ENCODE measurements at regions of chr7 and their contacts with region 1.

Region 1: GRCh38 chr7:21767300-21767900 is 178.3 kb downstream of the CDCA7L start:
- DNase-seq: peak; percentile 91
- ATAC-seq: peak; percentile 100
- H3K4me3 ChIP-seq: no peak overlapping the region
- H3K27ac ChIP-seq: no peak overlapping the region
- H3K4me1 ChIP-seq: no peaks in the 10 kb centered on the region
- H3K27me3 ChIP-seq: no peaks in the 10 kb centered on the region
- CTCF ChIP-seq: peak; percentile 85 to 98 (median 92)
- POLR2A ChIP-seq: no peak
- RAD21 ChIP-seq: peak; percentile 97

Region 2: DNA sequence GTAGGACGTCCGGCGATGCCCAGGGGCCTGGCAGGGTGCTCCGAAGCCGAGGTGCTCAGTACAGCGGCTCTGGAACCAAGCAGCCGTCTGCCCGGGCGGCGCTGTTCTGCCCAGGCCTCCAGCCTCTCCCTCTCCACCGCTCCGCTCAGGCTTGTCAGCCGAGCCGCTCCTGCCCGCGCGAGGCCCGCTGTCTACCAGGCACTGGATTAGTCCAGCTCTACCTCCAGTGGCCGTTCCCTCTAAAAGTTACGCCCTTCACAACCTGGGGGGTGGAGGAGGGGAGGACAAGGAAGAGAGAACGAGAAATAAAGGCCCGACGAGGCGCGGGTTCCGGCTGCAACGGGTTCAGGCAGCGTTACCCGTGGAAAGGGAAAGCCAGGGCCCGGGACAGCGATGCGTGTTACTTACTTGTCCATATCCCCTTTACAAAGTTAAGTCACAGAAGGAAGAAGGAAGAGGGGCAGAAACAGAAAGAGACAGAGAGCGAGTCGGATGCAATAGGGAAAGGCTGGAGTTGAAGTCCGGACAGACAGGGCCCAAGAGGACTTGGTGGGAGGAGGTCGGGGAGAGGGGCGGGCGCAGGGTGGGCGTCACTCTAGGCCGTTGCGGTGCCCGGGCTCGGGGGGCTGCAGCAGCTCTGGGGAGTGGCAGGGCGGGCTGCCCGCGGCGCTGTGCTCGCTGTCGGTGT is 983.6 kb before region 1 on chr7:
- CTCF ChIA-PET with region 1: interaction called, 5 read pairs
- POLR2A ChIA-PET with region 1: no interaction called
- RAD21 ChIA-PET with region 1: no interaction called
- intact Hi-C with region 1: loop called (anchors 5 kb)
- DNase-seq: no peak
- ATAC-seq: no peak
- H3K4me3 ChIP-seq: no peak overlapping the region
- H3K27ac ChIP-seq: no peak overlapping the region
- H3K4me1 ChIP-seq: peaks cover 2 to 12% of the 10 kb centered on the region in 2 experiments; a peak in 1 of 4 replicates
- H3K27me3 ChIP-seq: no peaks in the 10 kb centered on the region
- CTCF ChIP-seq: no peak
- POLR2A ChIP-seq: no peak
- RAD21 ChIP-seq: no peak

Region 3: DNA sequence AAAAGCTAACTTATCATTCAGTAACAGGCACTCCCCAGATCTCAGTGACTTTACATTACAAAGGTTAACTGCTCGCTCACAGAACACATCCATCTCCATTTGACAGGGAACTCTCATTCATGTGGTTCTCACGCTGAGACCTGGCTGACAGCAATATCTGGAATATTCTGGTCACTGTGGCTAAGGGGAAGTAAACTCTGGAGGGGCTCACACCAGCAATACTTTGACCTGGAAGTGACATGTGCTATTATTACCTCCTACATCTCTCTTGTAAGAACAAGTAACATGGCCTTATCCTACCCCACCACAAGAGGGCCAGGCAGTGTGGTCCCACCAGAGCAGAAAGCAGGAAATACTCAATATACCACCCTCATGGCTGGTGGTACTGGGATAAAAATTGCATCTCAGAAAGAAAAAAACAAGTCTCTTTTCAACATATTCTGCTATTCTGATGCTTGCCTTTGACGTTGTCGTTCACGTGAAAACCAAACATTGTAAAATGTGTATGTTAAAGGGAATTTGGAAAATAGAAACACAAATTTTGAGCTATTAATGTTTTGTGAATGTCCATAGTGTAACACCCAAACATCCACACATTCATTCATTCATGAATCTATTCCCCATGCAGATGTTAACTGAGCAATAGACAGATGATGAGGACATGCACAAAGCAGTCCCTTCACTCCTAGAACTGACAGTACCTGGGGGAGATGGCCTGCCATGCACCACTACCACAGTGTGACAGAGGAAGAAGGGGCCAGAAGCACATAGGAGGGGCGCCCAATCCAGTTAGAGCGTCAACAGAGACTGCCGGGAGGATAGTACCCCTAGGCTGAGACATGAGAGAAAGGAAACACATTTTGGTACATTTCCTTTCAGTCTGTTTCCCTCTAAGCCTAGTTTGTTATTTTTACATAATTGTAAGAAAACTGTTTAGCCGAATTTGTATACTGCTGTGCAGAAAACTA is 505.5 kb before region 1 on chr7:
- CTCF ChIA-PET with region 1: interaction called, 65 read pairs
- POLR2A ChIA-PET with region 1: no interaction called
- RAD21 ChIA-PET with region 1: interaction called, 3 to 5 read pairs
- intact Hi-C with region 1: loop called (anchors 1 kb)
- DNase-seq: peak; percentile 44
- ATAC-seq: peak; percentile 98
- H3K4me3 ChIP-seq: no peak overlapping the region
- H3K27ac ChIP-seq: no peak overlapping the region
- H3K4me1 ChIP-seq: no peaks in the 10 kb centered on the region
- H3K27me3 ChIP-seq: no peaks in the 10 kb centered on the region
- CTCF ChIP-seq: peak; percentile 69 to 79 (median 74)
- POLR2A ChIP-seq: no peak
- RAD21 ChIP-seq: peak; percentile 68

Region 4: DNA sequence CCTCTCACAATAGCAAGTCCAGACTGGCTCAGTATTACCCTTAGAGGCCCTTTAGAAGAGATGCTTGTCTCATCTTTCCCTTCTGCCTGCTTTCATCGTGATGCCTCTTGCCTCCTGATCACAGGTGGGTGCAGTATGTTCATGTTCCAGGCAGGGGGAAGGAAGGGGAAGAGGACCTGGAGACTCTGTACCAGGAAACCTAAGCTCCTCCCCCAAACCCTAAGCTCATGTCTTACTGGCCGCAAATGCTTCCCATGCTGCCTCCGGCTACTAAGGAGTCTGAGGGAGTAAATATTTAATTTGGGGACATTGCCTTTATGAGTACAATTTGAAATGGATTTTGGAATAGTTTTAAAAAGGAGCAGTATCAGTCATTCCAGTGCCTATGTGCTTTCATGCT is 14.3 kb before region 1 on chr7:
- CTCF ChIA-PET with region 1: interaction called, 10 read pairs
- POLR2A ChIA-PET with region 1: no interaction called
- RAD21 ChIA-PET with region 1: no interaction called
- intact Hi-C with region 1: no loop called
- DNase-seq: no peak
- ATAC-seq: peak; percentile 72; the same call in 1 of the 2 replicates
- H3K4me3 ChIP-seq: no peak overlapping the region
- H3K27ac ChIP-seq: no peak overlapping the region
- H3K4me1 ChIP-seq: no peaks in the 10 kb centered on the region
- H3K27me3 ChIP-seq: no peaks in the 10 kb centered on the region
- CTCF ChIP-seq: no peak
- POLR2A ChIP-seq: no peak
- RAD21 ChIP-seq: no peak

Region 5: GRCh38 chr7:22082886-22083703 is 315.7 kb after region 1 on chr7:
- CTCF ChIA-PET with region 1: interaction called, 11 read pairs
- POLR2A ChIA-PET with region 1: interaction called, 3 read pairs
- RAD21 ChIA-PET with region 1: no interaction called
- intact Hi-C with region 1: loop called (anchors 5 kb)
- DNase-seq: peak; percentile 53
- ATAC-seq: peak; percentile 95
- H3K4me3 ChIP-seq: peak overlapping the region; percentile 61 to 63
- H3K27ac ChIP-seq: peak overlapping the region; percentile 52
- H3K4me1 ChIP-seq: peaks cover 10 to 16% of the 10 kb centered on the region in 2 experiments; a peak in 3 of 4 replicates
- H3K27me3 ChIP-seq: no peaks in the 10 kb centered on the region
- CTCF ChIP-seq: peak; percentile 81 to 98 (median 88)
- POLR2A ChIP-seq: no peak
- RAD21 ChIP-seq: peak; percentile 90

Measured in HCT116 (cell line).